ENCODE measurements at regions of chr11 and their contacts with region 1.

Region 1: GRCh38 chr11:131579932-131580387 is 209.5 kb downstream of the NTM start:
- DNase-seq: peak in 1 of 2 experiments; percentile 75
- H3K4me3 ChIP-seq: no peak overlapping the region
- H3K27ac ChIP-seq: no peak overlapping the region
- H3K4me1 ChIP-seq: peaks cover 3 to 4% (median 4%) of the 10 kb centered on the region in 4 experiments; a peak in 4 of 7 replicates
- H3K27me3 ChIP-seq: no peaks in the 10 kb centered on the region
- CTCF ChIP-seq: peak; percentile 72 to 91 (median 80)
- EP300 ChIP-seq: no peak
- POLR2A ChIP-seq: no peak
- RAD21 ChIP-seq: peak; percentile 74 to 82

Region 2: DNA sequence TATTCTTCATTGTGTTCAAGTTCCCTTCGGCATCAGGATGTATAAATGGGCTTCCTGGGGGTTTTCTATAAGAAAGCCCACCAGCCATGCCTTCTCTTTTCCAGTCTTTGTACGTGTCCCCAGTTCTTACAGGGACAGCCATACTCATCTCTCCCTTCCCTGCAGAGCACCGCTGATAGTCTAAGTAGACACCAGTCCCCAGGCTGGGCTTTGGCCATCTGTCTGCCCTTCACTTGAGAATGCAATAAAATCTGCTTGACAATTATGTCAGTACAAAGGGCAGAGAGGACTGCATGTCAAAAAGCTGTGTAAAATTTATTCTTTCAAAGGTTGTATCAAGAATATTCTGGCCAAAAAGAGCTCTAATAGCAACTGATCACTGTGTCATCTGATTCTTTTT is 182.3 kb before region 1 on chr11:
- CTCF ChIA-PET with region 1: no interaction called
- POLR2A ChIA-PET with region 1: no interaction called
- DNase-seq: no peak
- H3K4me3 ChIP-seq: no peak overlapping the region
- H3K27ac ChIP-seq: no peak overlapping the region
- H3K4me1 ChIP-seq: peaks cover 0 to 2% (median 2%) of the 10 kb centered on the region in 4 experiments; a peak in 5 of 7 replicates
- H3K27me3 ChIP-seq: no peaks in the 10 kb centered on the region
- CTCF ChIP-seq: no peak
- EP300 ChIP-seq: no peak
- POLR2A ChIP-seq: no peak
- RAD21 ChIP-seq: no peak

Region 3: GRCh38 chr11:131544591-131544990 is 35.4 kb before region 1 on chr11:
- CTCF ChIA-PET with region 1: interaction called, 48 read pairs
- POLR2A ChIA-PET with region 1: no interaction called
- DNase-seq: peak; percentile 19 to 63
- H3K4me3 ChIP-seq: no peak overlapping the region
- H3K27ac ChIP-seq: no peak overlapping the region
- H3K4me1 ChIP-seq: peaks cover 0 to 4% (median 3%) of the 10 kb centered on the region in 4 experiments; a peak in 6 of 7 replicates
- H3K27me3 ChIP-seq: no peaks in the 10 kb centered on the region
- CTCF ChIP-seq: peak; percentile 51 to 71 (median 63)
- EP300 ChIP-seq: no peak
- POLR2A ChIP-seq: no peak
- RAD21 ChIP-seq: peak; percentile 73 to 83

Region 4: GRCh38 chr11:131561501-131561900 is 18.5 kb before region 1 on chr11:
- CTCF ChIA-PET with region 1: interaction called, 96 read pairs
- POLR2A ChIA-PET with region 1: no interaction called
- DNase-seq: no peak
- H3K4me3 ChIP-seq: no peak overlapping the region
- H3K27ac ChIP-seq: no peak overlapping the region
- H3K4me1 ChIP-seq: peaks cover 0 to 7% (median 0%) of the 10 kb centered on the region in 4 experiments; a peak in 4 of 7 replicates
- H3K27me3 ChIP-seq: no peaks in the 10 kb centered on the region
- CTCF ChIP-seq: no peak
- EP300 ChIP-seq: no peak
- POLR2A ChIP-seq: no peak
- RAD21 ChIP-seq: peak in 1 of 2 experiments; percentile 5; a peak in 1 of 4 replicates

Region 5: GRCh38 chr11:131609337-131609736 is 29.4 kb after region 1 on chr11:
- CTCF ChIA-PET with region 1: interaction called, 150 read pairs
- POLR2A ChIA-PET with region 1: interaction called, 3 read pairs
- DNase-seq: no peak
- H3K4me3 ChIP-seq: no peak overlapping the region
- H3K27ac ChIP-seq: no peak overlapping the region
- H3K4me1 ChIP-seq: peaks cover 2 to 11% (median 6%) of the 10 kb centered on the region in 4 experiments; a peak in 4 of 7 replicates
- H3K27me3 ChIP-seq: peaks cover 0 to 4% (median 3%) of the 10 kb centered on the region in 4 experiments; a peak in 3 of 7 replicates
- CTCF ChIP-seq: no peak
- EP300 ChIP-seq: no peak
- POLR2A ChIP-seq: no peak
- RAD21 ChIP-seq: no peak